ENCODE measurements at regions of chr21 and their contacts with region 1.

Region 1: DNA sequence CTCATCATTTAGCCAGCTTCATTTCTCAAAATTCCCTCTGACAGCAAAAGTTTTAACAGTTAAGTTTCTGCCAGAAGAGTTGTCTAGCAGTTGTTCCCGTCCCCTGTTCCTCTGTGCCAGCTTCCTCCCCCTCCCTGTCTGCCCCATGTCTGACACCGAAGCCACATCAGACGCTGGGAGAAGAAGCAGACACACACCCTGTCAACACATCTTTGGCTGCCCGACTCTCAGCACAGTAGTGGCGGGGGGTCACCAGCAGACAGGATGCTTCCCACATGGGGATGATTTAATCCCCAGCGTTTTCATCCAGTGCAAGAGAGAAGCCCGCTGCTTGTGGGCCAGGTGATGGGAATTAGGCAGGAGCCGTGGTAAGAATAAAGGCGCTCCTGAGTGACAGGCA is 379.4 kb upstream of the RUNX1 start:
- DNase-seq: peak; percentile 86

Region 2: DNA sequence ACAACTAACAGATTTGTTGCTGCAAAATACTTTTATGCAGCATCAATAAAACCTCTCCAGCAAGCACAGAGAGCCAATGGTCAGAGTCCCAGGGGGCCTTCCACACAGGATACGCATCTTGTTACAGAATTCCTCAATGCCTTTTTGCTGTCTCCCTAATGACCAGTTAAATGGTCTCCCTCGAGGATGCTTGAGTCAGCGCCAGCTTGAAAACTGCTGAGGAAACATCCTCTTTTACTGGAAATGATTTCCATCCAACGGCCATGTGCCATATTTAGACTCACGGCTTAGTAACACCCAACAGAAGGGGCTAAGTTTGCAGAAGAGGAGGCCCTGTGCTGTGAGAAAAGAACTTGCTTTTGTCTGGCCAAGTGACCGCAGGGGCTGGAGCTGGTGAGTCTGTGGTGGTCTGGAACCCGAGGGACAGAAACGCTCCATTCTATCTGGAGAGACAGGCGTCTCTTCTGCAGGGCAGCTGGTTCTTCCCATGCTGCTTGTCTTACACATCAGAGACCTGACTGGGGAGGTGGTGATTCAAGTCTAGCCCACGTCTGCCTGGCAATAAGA is 135.5 kb after region 1 on chr21:
- intact Hi-C with region 1: loop called (anchors 5 kb)
- DNase-seq: peak; percentile 76

Region 3: GRCh38 chr21:35616090-35616489 is 187.6 kb after region 1 on chr21:
- intact Hi-C with region 1: loop called (anchors 10 kb)
- DNase-seq: no peak

Measured in cardiac septum (tissue), 1 donor.